ENCODE measurements at regions of chr2 and their contacts with region 1.

Region 1: GRCh38 chr2:44981136-44982108 is 27.8 kb downstream of the SIX2 start:
- DNase-seq: peak; percentile 52 to 82
- ATAC-seq: peak in 1 of 3 donors; percentile 70
- H3K4me3 ChIP-seq: no peak overlapping the region
- H3K4me3 Mint-ChIP-seq: no peak overlapping the region
- H3K27ac ChIP-seq: no peak overlapping the region
- H3K27ac Mint-ChIP-seq: no peak overlapping the region
- H3K4me1 ChIP-seq: no peaks in the 10 kb centered on the region
- H3K4me1 Mint-ChIP-seq: peaks cover 0 to 6% of the 10 kb centered on the region in 2 donors
- H3K27me3 ChIP-seq: peaks cover 4% of the 10 kb centered on the region
- H3K27me3 Mint-ChIP-seq: peaks cover 19 to 27% of the 10 kb centered on the region in 2 donors
- CTCF ChIP-seq: peak; percentile 85

Region 2: GRCh38 chr2:45494269-45494977 is 513.0 kb after region 1 on chr2:
- intact Hi-C with region 1: loop called (anchors 1 kb)
- DNase-seq: peak in 1 of 2 donors; percentile 69
- ATAC-seq: peak in 2 of 3 donors; percentile 51 to 58
- H3K4me3 ChIP-seq: no peak overlapping the region
- H3K4me3 Mint-ChIP-seq: no peak overlapping the region
- H3K27ac ChIP-seq: no peak overlapping the region
- H3K27ac Mint-ChIP-seq: peak overlapping the region in 1 of 2 donors; percentile 9
- H3K4me1 ChIP-seq: no peaks in the 10 kb centered on the region
- H3K4me1 Mint-ChIP-seq: peaks cover 0 to 11% of the 10 kb centered on the region in 2 donors
- H3K27me3 ChIP-seq: no peaks in the 10 kb centered on the region
- H3K27me3 Mint-ChIP-seq: no peaks in the 10 kb centered on the region
- CTCF ChIP-seq: peak; percentile 68

Measured in natural killer cell (primary cell).